Adrenal gland (tissue), 19 donors: ENCODE measurements at regions of chr1 and their contacts with region 1.

Region 1: DNA sequence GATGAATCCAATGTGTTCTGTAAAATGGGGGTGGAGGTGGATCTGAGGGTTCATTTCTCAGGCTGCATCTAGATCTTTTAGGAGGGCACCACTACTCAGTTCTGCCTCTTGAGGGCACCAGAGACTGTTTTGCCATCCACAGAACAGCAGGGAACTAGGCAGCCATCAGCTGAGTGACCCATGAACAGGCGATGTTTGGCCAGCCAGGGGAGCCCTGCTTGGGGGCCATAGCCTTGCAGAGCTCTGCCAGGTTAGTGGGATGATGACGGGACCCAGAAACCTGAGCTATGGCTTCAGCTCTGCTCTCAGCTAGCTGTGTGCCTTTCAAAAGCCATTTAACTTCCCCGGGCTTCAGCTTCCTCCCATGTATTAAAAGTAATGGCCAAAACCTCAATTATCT is 13.4 kb upstream of the NOS1AP start:
- DNase-seq: peak; percentile 59 to 89 (median 71)
- H3K4me3 ChIP-seq: no peak overlapping the region
- H3K27ac ChIP-seq: no peak overlapping the region
- H3K4me1 ChIP-seq: no peaks in the 10 kb centered on the region
- H3K27me3 ChIP-seq: no peaks in the 10 kb centered on the region
- CTCF ChIP-seq: peak; percentile 88 to 96 (median 92)
- POLR2A ChIP-seq: no peak

Region 2: DNA sequence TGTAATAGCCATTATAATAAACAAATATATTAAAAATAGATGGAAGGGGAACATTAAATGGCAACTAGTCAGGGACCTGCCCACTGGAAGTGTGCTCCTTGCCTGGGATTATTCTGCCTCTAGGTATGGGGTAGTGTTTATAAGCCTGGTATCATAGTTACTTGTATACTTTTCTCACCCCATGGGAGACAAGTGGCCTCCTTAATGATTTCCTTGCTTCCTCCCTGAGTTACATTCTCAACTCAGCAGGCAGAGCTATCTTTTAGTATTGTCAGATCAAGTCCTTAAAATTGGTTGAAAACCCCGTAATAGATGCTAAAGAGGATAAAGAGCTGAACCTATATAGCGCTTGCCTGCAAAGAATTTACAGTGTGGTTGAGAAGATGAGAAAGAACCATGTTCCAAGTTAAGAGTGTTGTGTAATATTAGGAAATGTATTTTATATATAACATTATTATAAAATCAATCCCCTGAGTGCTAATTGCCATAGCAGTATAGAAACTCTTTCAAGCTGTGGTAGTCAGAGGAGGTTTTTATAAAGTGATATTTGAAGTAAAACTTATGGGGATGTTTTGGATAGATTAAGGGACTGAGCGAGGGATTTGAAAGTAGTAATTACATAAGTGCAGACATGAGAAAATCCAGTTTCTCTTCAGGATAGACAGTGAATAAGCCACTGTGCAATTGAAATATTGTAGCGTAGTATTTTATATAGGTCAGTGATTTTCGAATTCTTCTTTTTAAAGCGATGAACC is 214.2 kb after region 1 on chr1:
- intact Hi-C with region 1: loop called (anchors 5 kb)
- DNase-seq: no peak
- H3K4me3 ChIP-seq: no peak overlapping the region
- H3K27ac ChIP-seq: no peak overlapping the region
- H3K4me1 ChIP-seq: no peaks in the 10 kb centered on the region
- H3K27me3 ChIP-seq: no peaks in the 10 kb centered on the region
- CTCF ChIP-seq: no peak
- POLR2A ChIP-seq: no peak

Region 3: DNA sequence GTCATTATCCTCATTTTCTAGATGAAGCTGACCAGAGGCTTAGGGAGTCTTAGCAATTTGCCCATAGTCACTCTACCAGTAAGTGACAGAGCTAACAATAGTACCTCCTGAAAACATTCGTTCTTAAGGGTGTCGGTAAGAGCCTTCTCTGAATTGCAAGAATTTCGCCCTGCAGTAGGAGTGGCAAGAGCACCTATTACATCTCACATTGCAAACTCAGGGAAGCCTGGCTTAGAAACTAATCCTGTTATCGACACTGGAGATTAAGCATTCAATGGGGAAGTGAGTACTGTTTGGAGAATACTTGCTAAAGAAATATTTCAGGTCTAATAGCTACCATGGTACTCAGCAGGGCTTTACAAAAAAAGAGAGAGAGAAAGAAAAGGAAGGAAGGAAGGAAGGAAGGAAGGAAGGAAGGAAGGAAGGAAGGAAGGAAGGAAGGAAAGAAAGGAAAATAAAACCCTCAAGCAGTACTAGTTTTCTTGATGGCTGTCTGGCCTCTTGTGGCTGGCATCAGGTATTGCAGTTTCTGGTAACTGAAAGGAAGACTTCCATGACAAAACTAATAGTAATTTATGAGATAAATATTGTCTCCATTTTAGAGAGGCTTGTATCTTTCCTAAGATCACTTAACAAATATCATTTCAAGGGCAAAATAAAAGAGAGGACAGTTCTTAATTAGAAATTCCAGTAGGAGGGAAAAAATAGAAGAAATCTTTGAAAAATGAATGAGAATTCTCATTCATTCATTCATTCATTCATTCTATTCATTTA is 335.9 kb after region 1 on chr1:
- intact Hi-C with region 1: loop called in 1 of 2 experiments (anchors 2 kb)
- DNase-seq: peak in 6 of 7 donors; percentile 29 to 72 (median 52)
- H3K4me3 ChIP-seq: no peak overlapping the region
- H3K27ac ChIP-seq: no peak overlapping the region
- H3K4me1 ChIP-seq: no peaks in the 10 kb centered on the region
- H3K27me3 ChIP-seq: peaks cover 12% of the 10 kb centered on the region
- CTCF ChIP-seq: peak; percentile 70 to 96 (median 80)
- POLR2A ChIP-seq: no peak